WTC11 (cell line): ENCODE measurements at regions of chr14 and their contacts with region 1.

Region 1: DNA sequence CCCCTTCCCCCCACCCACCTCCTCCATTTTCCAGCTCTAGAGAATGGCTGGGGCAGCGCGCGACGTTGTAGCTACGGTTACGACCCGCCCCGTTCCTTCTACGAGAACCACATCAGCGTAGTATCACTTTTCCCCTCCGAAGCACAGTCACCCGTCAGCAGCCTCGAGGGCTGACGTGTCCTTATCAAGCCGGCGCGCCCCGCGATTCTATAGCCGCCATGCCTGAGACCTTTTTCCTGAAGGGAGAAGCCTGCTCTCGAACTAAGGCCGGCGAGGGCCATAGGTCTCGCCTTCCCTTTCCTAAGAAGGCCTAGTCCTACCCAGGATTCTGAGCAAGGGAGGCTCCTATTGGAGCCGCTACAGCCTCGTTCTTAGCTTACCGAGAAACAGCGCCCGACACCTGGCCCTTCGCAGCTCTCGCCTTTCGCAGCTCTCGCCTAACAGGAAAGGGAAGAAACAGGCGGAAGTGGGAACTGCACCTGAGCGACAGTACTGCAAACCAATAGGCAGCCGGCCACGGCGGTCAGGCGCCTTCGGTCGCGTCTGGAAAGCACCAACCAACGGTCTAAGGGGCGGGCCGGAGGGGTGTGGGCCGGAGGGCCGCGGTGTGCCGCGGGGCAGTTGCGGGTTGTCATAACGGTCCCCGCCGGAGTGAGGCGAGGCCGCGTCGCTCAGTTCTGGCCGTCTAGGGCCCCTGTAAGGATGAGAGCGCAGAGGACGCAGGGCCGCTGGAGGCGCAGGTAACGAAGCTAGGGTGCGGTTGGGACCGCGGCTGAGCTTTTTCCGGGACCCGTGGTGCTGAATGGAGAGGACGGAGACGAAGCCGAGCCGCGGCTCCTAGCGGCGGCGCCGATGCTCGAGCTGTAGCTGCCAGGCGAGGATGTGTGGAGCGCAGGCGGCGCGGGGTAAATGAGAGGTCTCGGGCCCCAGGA is at the starts of genes MGAT2 and RPL36AL:
- DNase-seq: peak; percentile 99
- ATAC-seq: peak; percentile 98
- H3K4me3 Mint-ChIP-seq: peak within 1 kb of the TSS; percentile 98
- H3K27ac Mint-ChIP-seq: peak within 1 kb of the TSS; percentile 98
- H3K4me1 Mint-ChIP-seq: peaks cover 23% of the 10 kb centered on the region
- H3K27me3 Mint-ChIP-seq: no peaks in the 10 kb centered on the region
- CTCF ChIP-seq: no peak
- total RNA-seq, gene MGAT2: 24.5 to 27.7 TPM (median 25.2 TPM) in 3 replicates
- total RNA-seq, gene RPL36AL: 173 to 212 TPM (median 177 TPM) in 3 replicates

Region 2: DNA sequence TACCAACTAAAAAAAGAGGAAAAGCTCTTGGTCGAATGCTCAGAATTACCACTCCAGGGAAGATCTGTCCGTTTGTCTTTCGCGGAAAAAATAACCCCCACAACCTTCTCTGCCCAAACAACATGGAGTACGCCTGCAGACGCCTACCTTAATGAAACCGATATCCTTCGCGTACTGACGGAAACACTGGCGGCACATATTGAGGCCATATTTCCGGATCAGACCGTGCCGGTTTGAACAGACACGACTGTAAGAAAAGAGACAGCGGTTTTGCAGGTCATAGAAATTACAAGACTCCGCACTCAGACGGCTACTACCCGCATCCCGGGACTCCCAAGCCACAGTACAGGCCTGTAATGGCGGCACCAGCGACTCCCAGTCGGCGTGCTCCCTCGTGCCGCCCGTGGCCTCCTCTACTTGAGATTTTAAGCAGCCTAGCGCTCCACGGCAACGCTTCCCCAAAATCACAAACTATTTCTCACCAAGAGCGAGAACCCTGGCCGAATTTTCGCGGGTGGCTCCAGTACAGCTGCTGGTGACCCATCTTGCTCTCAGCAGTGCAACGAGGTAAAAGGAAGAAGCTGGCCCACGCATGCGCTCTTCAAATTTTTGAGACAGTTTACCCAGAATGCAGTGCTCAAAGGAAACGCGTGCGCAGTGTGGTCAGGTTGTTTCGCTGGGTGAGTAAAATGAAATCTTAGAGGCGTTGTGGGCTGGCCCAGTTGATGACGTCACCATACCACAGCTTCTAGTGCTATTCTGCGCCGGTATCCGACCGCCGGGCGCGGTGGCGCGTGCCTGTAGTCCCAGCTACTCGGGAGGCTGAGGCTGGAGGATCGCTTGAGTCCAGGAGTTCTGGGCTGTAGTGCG is 34.4 kb before region 1 on chr14 and contains the start of gene RPS29:
- CTCF ChIA-PET with region 1: interaction called, 18 read pairs
- POLR2A ChIA-PET with region 1: interaction called, 33 read pairs
- DNase-seq: peak; percentile 98
- ATAC-seq: peak; percentile 81
- H3K4me3 Mint-ChIP-seq: peak within 1 kb of the TSS; percentile 95
- H3K27ac Mint-ChIP-seq: peak within 1 kb of the TSS; percentile 97
- H3K4me1 Mint-ChIP-seq: peaks cover 34% of the 10 kb centered on the region
- H3K27me3 Mint-ChIP-seq: peaks cover 4% of the 10 kb centered on the region; the same call in 1 of the 2 replicates
- CTCF ChIP-seq: no peak
- total RNA-seq, gene RPS29: 2,168 to 2,393 TPM (median 2,330 TPM) in 3 replicates

Region 3: GRCh38 chr14:49598485-49599300 is 21.8 kb before region 1 on chr14 and contains the start of gene LRR1:
- CTCF ChIA-PET with region 1: interaction called, 6 read pairs
- POLR2A ChIA-PET with region 1: interaction called, 21 read pairs
- DNase-seq: peak; percentile 83
- ATAC-seq: peak; percentile 74
- H3K4me3 Mint-ChIP-seq: peak within 1 kb of the TSS; percentile 84
- H3K27ac Mint-ChIP-seq: peak within 1 kb of the TSS; percentile 94
- H3K4me1 Mint-ChIP-seq: peaks cover 10% of the 10 kb centered on the region
- H3K27me3 Mint-ChIP-seq: peaks cover 5% of the 10 kb centered on the region
- CTCF ChIP-seq: no peak
- total RNA-seq, gene LRR1: 32.5 to 42.6 TPM (median 32.8 TPM) in 3 replicates

Region 4: DNA sequence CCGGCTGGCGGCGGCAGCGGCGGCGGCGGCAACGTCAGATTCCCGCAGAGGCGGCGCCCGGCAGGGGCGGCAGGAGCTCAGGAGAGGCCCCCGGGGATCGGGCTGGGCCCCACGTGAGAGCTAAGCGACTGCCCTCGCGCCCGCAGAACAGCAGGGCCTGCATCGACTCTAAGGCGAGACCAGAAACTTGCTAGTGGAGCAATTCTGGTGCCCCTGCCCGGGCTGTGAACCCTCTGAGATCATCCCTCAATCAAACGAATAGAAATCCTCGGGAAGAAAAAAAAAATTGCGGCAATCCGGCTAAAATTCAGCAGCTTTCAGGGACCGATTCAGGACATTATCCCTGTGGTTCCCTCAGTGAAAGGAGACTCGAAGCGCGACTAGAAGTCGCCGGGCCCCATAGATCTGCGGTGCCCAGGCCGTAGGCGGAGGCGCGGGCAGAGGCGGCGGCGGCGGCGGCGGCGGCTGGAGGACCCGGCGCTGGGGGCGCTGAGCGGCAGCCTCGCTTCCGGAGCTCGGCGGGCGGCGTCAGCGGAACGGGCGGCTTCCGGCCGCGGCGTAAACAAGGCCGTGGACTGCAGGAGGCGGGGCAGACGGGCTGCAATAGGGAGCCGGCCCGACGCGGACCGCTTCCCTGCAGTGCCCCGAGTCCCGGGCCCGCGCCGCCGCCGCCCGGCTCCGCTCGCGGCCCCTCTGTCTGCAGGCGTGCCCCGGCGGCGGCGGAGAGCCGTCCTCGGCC is 147.3 kb after region 1 on chr14 and contains the start of gene KLHDC2:
- CTCF ChIA-PET with region 1: interaction called, 4 read pairs
- POLR2A ChIA-PET with region 1: interaction called, 25 read pairs
- DNase-seq: peak; percentile 87
- ATAC-seq: peak; percentile 88
- H3K4me3 Mint-ChIP-seq: peak within 1 kb of the TSS; percentile 98
- H3K27ac Mint-ChIP-seq: peak within 1 kb of the TSS; percentile 100
- H3K4me1 Mint-ChIP-seq: peaks cover 24% of the 10 kb centered on the region
- H3K27me3 Mint-ChIP-seq: no peaks in the 10 kb centered on the region
- CTCF ChIP-seq: no peak
- total RNA-seq, gene KLHDC2: 38.7 to 47.6 TPM (median 42.5 TPM) in 3 replicates